MCF 10A (cell line): ENCODE measurements at regions of chr7 and their contacts with region 1.

Region 1: GRCh38 chr7:106659963-106660861 is 746 bp downstream of the CCDC71L start:
- DNase-seq: peak; percentile 81
- H3K4me3 Mint-ChIP-seq: peak overlapping the region; percentile 80
- H3K27ac Mint-ChIP-seq: peak overlapping the region; percentile 83
- H3K4me1 Mint-ChIP-seq: peaks cover 14% of the 10 kb centered on the region
- H3K27me3 Mint-ChIP-seq: no peaks in the 10 kb centered on the region
- CTCF ChIP-seq: peak; percentile 98

Region 2: DNA sequence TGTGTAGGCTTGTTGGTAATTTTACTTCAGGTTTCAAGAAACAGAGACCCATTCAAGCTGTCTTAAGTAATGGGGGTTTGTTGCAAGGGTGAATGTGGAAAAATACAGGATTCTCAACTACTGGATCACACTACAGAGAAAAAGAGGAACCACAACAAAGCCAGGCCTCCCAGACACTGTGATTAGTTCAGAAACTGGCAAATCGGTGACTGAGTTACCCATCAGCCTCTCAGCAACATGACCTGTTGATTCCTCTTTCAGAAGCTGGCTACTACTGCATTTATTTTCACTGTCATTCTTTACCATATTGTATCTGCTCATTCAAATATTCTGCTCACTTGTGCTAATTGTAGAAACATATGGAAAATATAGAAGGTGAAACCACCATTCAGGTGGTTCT is 15.2 kb before region 1 on chr7:
- CTCF ChIA-PET with region 1: interaction called, 45 read pairs
- POLR2A ChIA-PET with region 1: interaction called, 5 read pairs
- intact Hi-C with region 1: no loop called
- DNase-seq: no peak
- H3K4me3 Mint-ChIP-seq: no peak overlapping the region
- H3K27ac Mint-ChIP-seq: no peak overlapping the region
- H3K4me1 Mint-ChIP-seq: peaks cover 8% of the 10 kb centered on the region
- H3K27me3 Mint-ChIP-seq: no peaks in the 10 kb centered on the region
- CTCF ChIP-seq: no peak

Region 3: DNA sequence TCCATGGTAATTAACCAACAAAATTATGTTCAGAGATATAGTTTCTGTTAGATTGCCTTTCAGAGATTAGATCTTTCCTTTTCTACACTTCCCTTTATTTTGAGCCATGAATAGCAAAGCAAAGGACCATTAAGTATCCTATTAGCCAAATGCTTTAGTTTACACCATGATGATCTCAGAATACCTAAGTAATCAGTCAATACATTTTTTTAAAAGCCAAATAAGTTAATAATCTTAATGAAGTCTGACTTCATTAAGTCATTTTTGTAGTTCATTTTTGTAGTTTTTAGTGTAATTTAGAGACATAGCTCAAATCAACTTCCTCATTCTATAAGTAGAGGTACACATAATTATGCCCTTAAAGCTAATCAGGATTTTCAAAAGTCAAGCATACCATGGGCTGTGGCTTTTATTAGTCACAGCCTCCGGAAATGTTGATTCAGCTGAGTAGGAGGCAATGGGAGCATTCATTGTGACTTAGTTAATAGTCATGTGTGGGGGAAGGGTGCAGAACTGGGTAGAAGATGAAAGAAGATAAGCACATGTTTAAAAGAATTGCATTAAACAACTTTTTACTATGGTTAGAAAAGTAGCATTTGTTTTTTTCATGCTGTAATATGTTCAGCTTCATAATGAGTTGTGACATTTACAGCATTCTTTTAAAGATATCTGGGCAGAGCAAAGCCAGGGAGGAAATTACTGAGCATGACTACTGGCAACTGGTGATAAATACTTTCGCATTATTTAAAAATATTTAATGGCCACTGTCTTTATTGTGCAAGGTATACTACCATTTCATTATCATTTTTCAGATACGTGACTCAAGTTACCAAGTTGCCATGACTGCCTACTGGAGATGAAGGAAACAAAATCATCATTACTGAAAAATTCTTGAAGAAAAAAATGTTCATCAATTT is 58.0 kb after region 1 on chr7:
- CTCF ChIA-PET with region 1: interaction called, 5 read pairs
- POLR2A ChIA-PET with region 1: no interaction called
- intact Hi-C with region 1: loop called (anchors 1 kb)
- DNase-seq: peak; percentile 93
- H3K4me3 Mint-ChIP-seq: no peak overlapping the region
- H3K27ac Mint-ChIP-seq: no peak overlapping the region
- H3K4me1 Mint-ChIP-seq: no peaks in the 10 kb centered on the region
- H3K27me3 Mint-ChIP-seq: no peaks in the 10 kb centered on the region
- CTCF ChIP-seq: no peak

Region 4: GRCh38 chr7:106779877-106780276 is 119.7 kb after region 1 on chr7:
- CTCF ChIA-PET with region 1: interaction called, 4 read pairs
- POLR2A ChIA-PET with region 1: no interaction called
- intact Hi-C with region 1: loop called (anchors 5 kb)
- DNase-seq: peak; percentile 35
- H3K4me3 Mint-ChIP-seq: no peak overlapping the region
- H3K27ac Mint-ChIP-seq: no peak overlapping the region
- H3K4me1 Mint-ChIP-seq: peaks cover 16% of the 10 kb centered on the region
- H3K27me3 Mint-ChIP-seq: no peaks in the 10 kb centered on the region
- CTCF ChIP-seq: no peak